ENCODE measurements at regions of chr5 and their contacts with region 1.

Region 1: DNA sequence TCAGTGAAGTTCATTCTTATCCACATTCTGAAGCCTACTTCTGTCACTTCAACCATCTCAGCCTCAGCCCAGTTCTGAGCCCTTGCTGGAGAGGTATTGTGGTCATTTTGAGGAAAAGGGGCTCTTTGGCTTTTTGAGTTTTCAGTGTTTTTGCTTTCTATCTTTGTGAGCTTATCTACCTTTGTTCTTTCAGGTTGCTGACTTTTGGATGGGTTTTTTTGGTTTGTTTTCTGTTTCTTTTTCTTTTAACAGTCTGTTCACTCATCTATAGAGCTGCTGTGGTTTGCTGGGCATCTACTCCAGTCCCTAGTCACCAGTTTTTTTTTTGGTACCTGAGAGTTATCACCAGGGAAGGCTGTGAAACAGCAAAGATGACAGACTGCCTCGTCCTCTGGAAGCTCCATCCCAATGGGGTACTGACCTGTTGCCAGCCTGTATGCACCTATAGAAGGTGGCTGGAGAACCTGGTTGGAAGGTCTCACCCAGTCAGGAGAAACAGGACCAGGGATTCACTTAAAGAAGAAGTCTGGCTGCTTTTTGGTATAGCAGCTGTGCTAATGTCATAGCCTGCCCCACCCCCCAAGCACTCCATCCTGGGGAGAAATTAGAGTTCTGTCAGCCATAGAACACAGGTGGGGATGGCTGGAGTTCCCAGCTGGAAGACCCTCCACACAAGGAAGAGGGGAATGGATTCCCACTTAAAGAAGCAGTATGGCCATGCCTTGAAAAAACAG is 138.6 kb upstream of the TSLP start:
- DNase-seq: no peak
- H3K4me3 ChIP-seq: no peak overlapping the region
- H3K27ac ChIP-seq: no peak overlapping the region
- H3K4me1 ChIP-seq: no peaks in the 10 kb centered on the region
- CTCF ChIP-seq: no peak

Region 2: DNA sequence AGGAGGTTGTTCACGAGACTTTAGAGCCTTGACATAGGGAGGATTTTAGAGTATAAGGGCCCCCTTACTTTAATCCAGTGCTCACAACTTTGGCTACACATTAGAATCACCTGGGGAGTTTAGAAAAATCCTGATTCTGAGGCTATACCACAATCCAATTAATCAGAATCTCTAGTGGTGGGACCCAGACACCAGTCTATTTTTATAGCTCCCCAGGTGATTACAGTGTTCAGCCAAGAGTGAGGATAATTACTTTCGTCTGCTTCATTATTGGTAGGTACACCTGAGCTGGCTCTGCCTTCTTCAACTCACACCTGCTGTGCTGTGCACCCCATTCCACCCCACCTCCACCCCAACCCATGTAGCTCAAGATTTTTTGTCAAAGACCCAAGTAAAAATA is 1627.4 kb after region 1 on chr5:
- CTCF ChIA-PET with region 1: no interaction called
- POLR2A ChIA-PET with region 1: interaction called, 11 read pairs
- intact Hi-C with region 1: no loop called
- DNase-seq: no peak
- H3K4me3 ChIP-seq: no peak overlapping the region
- H3K27ac ChIP-seq: no peak overlapping the region
- H3K4me1 ChIP-seq: no peaks in the 10 kb centered on the region
- CTCF ChIP-seq: no peak